ENCODE measurements at regions of chr14 and their contacts with region 1.

Region 1: GRCh38 chr14:22973217-22974032 is 8.9 kb downstream of the AJUBA start:
- DNase-seq: peak; percentile 63
- CTCF ChIP-seq: peak; percentile 80

Region 2: DNA sequence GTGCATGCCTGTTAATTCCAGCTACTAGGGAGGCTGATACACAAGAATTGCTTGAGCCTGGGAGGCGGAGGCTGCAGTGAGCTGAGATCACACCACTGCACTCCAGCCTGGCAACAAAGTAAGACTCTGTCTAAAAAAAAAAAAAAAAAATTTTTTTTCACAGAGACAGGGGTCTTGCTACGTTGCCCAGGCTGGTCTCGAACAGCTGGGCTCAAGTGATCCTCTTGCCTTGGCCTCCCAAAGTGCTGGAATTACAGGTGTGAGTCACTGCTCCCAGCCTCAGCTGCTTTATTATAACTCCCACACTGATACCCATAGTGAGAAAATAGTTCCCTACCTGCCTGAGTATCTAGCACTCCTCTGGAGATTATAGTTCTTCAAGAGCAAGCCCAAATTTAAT is 27.8 kb before region 1 on chr14:
- CTCF ChIA-PET with region 1: interaction called, 22 read pairs
- POLR2A ChIA-PET with region 1: no interaction called
- DNase-seq: no peak
- CTCF ChIP-seq: no peak